ENCODE measurements at regions of chr14 and their contacts with region 1.

Region 1: GRCh38 chr14:30375296-30375892 is 183.6 kb upstream of the G2E3 start:
- DNase-seq: no peak
- H3K4me3 ChIP-seq: no peak overlapping the region
- H3K27ac ChIP-seq: no peak overlapping the region
- H3K4me1 ChIP-seq: no peaks in the 10 kb centered on the region
- H3K27me3 ChIP-seq: no peaks in the 10 kb centered on the region
- CTCF ChIP-seq: peak in 3 of 4 experiments; percentile 23 to 65 (median 41)
- EP300 ChIP-seq: no peak
- POLR2A ChIP-seq: no peak

Region 2: DNA sequence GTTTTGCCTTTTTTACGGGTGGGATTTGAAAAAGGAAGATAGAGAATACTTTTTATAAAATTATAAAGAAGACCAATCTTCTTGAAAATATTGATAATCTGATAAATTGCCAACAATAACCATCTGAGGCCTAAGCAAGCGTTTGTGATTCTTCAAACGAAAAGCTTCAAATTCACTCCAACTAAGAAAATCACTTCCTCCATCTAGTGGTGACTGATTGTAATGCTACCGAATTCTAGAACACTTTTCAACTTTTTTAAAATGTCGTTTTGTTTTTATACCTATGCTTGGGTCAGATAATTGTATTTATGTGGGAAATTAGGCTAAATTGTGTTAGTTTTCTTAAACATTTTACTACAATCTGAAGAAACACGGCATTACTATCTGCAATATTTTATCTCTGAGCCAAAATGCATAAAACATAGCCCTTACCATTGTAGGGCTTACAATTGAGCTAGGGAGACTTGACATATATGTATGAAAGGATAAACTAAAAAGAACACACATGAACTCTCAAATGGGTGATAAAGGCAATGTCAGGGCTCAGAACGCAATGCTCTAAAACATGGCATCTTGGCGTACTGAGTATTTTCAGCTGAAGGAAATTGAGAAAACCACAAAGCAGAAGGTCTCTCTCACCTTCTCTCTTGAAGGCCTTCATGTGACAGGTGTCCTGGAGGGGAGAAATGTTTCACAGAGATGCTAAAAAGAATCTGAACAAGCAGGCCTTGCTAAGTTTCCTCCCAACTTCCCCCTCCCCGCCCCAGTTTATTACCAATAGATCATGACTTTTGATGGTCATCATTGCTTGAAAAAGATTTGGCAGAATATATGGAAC is 146.7 kb after region 1 on chr14:
- intact Hi-C with region 1: loop called (anchors 10 kb)
- DNase-seq: no peak
- H3K4me3 ChIP-seq: no peak overlapping the region
- H3K27ac ChIP-seq: no peak overlapping the region
- H3K4me1 ChIP-seq: peaks cover 0 to 4% (median 0%) of the 10 kb centered on the region in 4 donors
- H3K27me3 ChIP-seq: no peaks in the 10 kb centered on the region
- CTCF ChIP-seq: peak; percentile 5 to 72 (median 50)
- EP300 ChIP-seq: no peak
- POLR2A ChIP-seq: no peak